Caco-2 (cell line): ENCODE measurements at regions of chr17 and their contacts with region 1.

Region 1: DNA sequence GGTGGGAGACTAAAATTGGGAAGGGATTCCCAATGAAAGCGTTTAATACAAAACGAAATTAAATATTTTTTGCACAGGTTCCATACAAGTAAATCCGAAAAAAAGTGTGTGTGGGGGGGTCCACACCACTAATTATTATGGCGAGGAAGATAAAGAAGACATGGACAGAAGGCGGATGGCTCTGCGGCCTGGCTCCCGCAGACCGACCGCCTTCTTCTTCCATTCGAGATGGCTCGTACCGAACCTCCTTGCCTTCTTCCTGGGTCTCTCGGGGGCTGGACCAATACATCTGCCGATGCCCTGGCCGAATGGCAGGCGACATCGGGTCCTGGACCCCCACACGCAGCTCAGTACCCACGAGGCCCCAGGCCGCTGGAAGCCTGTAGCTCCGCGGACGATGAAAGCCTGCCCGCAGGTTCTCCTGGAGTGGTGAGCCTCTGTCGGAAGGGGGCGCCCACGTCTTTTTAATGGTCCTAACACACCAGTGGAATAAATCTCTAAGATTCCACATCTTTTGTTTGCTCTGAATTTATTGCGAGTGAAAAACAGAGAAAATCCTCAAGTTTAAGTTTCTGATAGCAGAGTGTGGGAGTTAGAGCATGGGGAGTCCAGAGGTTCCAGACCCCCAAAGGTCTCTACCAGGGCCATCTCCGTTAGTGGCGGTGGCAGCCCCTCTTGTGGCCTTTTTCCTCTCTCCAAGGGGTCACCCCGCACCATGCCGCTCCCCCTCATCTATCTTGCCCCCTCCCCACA is 1.4 kb downstream of the PRAC2 start:
- DNase-seq: peak; percentile 91 to 94
- H3K4me3 ChIP-seq: no peak overlapping the region
- H3K4me3 Mint-ChIP-seq: no peak overlapping the region
- H3K27ac Mint-ChIP-seq: no peak overlapping the region
- H3K4me1 ChIP-seq: peaks cover 26% of the 10 kb centered on the region
- H3K4me1 Mint-ChIP-seq: peaks cover 2% of the 10 kb centered on the region
- H3K27me3 ChIP-seq: no peaks in the 10 kb centered on the region
- H3K27me3 Mint-ChIP-seq: no peaks in the 10 kb centered on the region
- CTCF ChIP-seq: peak; percentile 97 to 98

Region 2: DNA sequence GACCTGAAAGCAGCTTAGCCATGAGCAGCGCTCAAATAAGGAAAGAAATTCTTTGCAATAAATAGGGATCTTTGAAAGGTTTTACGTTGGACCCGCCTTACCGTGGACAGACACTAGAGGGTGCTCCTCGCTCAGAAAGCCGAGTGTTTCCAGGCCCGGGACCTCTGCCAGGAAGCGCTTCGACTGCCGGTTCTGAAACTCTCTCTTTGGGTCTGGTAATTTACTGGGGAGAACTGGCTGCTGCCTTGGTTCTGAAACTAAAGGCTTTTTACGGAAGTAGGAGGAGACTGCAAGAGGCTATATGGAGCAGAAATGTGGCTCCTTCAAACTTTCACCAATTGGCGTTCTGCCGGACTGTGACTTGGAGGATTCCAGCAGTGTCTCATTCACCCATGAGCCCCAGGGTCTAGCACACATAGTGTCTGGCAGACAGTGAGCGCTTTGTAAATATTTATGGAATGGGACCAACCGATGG is 52.7 kb before region 1 on chr17:
- CTCF ChIA-PET with region 1: interaction called, 37 read pairs
- POLR2A ChIA-PET with region 1: no interaction called
- intact Hi-C with region 1: loop called (anchors 2 kb)
- DNase-seq: peak; percentile 86 to 94
- H3K4me3 ChIP-seq: peak overlapping the region; percentile 23
- H3K4me3 Mint-ChIP-seq: peak overlapping the region; percentile 58
- H3K27ac Mint-ChIP-seq: peak overlapping the region; percentile 11
- H3K4me1 ChIP-seq: no peaks in the 10 kb centered on the region
- H3K4me1 Mint-ChIP-seq: peaks cover 5% of the 10 kb centered on the region
- H3K27me3 ChIP-seq: no peaks in the 10 kb centered on the region
- H3K27me3 Mint-ChIP-seq: peaks cover 2% of the 10 kb centered on the region
- CTCF ChIP-seq: peak; percentile 99

Region 3: DNA sequence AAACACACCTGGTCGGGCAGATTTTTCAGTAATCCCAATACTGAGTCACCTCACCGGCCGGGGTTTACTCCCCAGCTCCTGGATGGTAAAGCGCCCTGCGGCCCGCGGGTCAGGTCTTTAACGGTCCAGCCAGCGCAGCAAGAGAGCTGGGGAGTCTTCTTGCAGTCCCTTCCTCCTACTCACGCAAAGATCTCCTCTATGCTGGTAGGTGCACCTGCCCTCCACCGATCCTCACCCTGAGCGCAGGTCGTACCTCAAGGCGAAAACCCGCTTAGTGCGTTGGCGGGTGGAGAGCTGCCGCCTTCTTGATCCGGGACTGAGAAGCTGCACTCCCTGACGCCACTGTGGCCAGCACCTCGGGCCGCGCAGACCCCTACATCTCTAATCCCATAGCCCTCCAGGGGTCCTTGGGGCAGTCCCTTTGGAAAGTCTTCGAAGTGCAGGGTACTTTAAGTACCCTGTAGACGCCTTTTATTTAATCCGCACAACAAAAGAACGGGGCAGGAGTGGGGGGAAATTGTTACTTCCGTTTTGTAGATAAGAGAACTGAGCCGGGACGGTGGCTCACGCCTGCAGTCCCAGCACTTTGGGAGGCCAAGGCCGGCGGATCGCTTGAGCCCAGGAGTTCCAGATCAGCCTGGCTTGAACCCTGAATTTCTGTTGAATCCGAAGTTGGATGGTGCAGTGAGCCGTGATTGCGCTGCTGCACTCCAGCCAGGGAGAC is 14.5 kb after region 1 on chr17:
- CTCF ChIA-PET with region 1: interaction called, 12 read pairs
- POLR2A ChIA-PET with region 1: interaction called, 4 read pairs
- intact Hi-C with region 1: no loop called
- DNase-seq: peak in 1 of 2 experiments; percentile 62
- H3K4me3 ChIP-seq: no peak overlapping the region
- H3K4me3 Mint-ChIP-seq: no peak overlapping the region
- H3K27ac Mint-ChIP-seq: no peak overlapping the region
- H3K4me1 ChIP-seq: no peaks in the 10 kb centered on the region; the same call in 1 of the 2 replicates
- H3K4me1 Mint-ChIP-seq: no peaks in the 10 kb centered on the region
- H3K27me3 ChIP-seq: peaks cover 1% of the 10 kb centered on the region; the same call in 1 of the 2 replicates
- H3K27me3 Mint-ChIP-seq: peaks cover 4% of the 10 kb centered on the region
- CTCF ChIP-seq: no peak

Region 4: DNA sequence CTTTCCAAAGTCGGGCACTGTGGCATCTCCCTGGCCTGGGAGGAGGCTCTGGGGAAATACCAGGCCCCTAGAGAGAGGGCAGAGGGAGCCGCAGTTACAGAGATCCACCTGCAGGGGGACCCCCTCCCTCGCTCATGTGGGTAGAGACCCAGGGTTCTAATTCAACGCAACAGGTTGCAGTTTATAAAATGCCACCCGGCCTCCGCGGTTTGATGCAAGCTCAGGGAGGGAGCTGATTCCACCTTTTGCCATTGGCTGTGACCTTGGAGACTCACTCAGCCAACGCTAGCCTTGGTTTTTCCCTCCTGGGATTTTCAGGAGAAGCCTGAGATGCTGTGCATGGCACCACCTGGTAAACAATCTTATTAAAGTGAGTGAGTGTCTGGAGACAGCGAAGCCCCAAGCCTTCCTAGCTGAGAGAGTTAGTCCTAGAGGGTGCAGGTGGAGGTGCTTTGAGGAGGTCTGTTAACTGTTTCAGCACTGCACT is 80.5 kb after region 1 on chr17:
- CTCF ChIA-PET with region 1: interaction called, 12 read pairs
- POLR2A ChIA-PET with region 1: no interaction called
- intact Hi-C with region 1: no loop called
- DNase-seq: peak; percentile 86 to 95
- H3K4me3 ChIP-seq: no peak overlapping the region
- H3K4me3 Mint-ChIP-seq: no peak overlapping the region
- H3K27ac Mint-ChIP-seq: no peak overlapping the region
- H3K4me1 ChIP-seq: peaks cover 15% of the 10 kb centered on the region
- H3K4me1 Mint-ChIP-seq: peaks cover 17% of the 10 kb centered on the region
- H3K27me3 ChIP-seq: no peaks in the 10 kb centered on the region
- H3K27me3 Mint-ChIP-seq: no peaks in the 10 kb centered on the region
- CTCF ChIP-seq: peak; percentile 100

Region 5: DNA sequence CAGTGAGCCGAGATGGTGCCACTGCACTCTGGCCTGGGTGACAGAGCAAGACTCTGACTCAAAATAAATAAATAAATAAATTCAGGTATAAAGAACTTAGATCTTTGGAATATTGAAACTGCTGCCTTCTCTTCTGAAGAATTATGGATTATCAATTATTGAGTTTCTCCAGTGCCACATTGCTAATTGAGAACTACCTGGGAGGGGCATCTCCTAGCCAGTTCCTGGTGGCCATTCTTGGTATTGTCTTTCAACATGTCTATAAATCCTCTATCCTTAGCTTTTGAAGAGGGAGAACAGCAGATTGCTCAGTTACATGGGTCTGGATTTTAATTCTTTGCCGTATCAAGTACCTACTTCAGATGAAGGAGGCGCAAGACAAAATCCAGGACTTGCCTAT is 135.6 kb after region 1 on chr17:
- CTCF ChIA-PET with region 1: no interaction called
- POLR2A ChIA-PET with region 1: no interaction called
- intact Hi-C with region 1: no loop called
- DNase-seq: peak in 1 of 2 experiments; percentile 40
- H3K4me3 ChIP-seq: no peak overlapping the region
- H3K4me3 Mint-ChIP-seq: no peak overlapping the region
- H3K27ac Mint-ChIP-seq: no peak overlapping the region
- H3K4me1 ChIP-seq: peaks cover 5% of the 10 kb centered on the region
- H3K4me1 Mint-ChIP-seq: peaks cover 3% of the 10 kb centered on the region
- H3K27me3 ChIP-seq: no peaks in the 10 kb centered on the region
- H3K27me3 Mint-ChIP-seq: no peaks in the 10 kb centered on the region
- CTCF ChIP-seq: peak; percentile 56 to 78